CD8-positive, alpha-beta T cell (primary cell): ENCODE measurements at regions of chr16 and their contacts with region 1.

Region 1: GRCh38 chr16:75555707-75556430 is at the start of gene TMEM231:
- DNase-seq: peak; percentile 95 to 98 (median 97)
- ATAC-seq: peak; percentile 96
- H3K4me3 ChIP-seq: peak within 1 kb of the TSS; percentile 61 to 69
- H3K4me3 Mint-ChIP-seq: peak within 1 kb of the TSS; percentile 86
- H3K27ac ChIP-seq: peak within 1 kb of the TSS; percentile 65 to 70
- H3K27ac Mint-ChIP-seq: peak within 1 kb of the TSS; percentile 88
- H3K4me1 ChIP-seq: peaks cover 12% of the 10 kb centered on the region
- H3K4me1 Mint-ChIP-seq: peaks cover 14% of the 10 kb centered on the region
- H3K27me3 ChIP-seq: no peaks in the 10 kb centered on the region
- H3K27me3 Mint-ChIP-seq: peaks cover 9% of the 10 kb centered on the region
- CTCF ChIP-seq: no peak
- total RNA-seq, gene TMEM231: 2.1 to 2.8 TPM

Region 2: DNA sequence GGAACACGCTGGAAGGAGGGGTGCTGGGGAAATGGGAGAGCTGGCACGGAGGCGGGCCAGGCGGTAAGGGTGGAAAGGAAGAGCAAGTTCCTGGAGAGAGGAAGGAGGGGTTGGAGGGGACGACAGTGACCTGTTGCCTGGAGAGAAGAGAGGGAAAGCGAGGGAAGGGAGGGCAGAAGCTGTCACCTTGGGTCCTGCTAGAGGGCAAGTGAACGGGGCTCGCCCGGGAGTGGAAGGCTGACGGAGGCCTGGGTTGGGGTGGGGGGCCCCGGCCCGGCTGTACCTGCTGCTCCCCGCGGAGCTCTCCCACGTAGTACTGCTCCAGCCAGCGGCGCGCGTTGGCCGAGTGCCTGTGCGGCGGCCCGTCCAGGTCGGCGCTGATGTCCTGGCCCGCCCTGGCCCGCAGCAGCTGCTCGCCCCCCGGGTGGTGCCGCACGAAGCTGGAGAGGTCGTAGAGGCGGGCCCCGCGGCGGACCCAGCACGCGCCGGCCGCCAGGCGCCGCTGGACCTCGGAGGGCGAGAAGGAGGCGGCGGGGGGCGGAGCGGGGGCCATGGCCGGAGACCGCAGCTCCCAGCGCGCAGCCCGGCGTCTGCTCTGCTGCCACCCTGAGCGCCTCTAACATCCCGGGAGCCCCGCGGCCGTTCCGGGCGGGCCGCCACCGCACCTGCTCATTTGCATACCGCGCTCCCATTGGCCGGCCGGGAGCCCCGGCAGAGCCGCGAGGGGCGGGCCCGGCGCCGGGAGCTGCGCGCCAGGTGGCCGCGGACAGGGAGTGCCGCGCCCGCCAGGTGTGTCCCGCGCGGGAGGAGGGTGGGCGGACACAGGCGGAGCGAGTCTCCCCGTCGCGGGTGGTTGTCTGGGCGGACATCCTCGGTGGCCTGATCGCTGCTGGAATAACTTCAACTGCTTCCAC is 781.4 kb before region 1 on chr16 and contains the start of gene FA2H:
- CTCF ChIA-PET with region 1: no interaction called
- POLR2A ChIA-PET with region 1: no interaction called
- intact Hi-C with region 1: no loop called
- DNase-seq: peak; percentile 11 to 70 (median 59)
- ATAC-seq: peak; percentile 97
- H3K4me3 ChIP-seq: peak within 1 kb of the TSS in 1 of 2 experiments; percentile 9
- H3K4me3 Mint-ChIP-seq: peak within 1 kb of the TSS; percentile 75
- H3K27ac ChIP-seq: no peak within 1 kb of the TSS
- H3K27ac Mint-ChIP-seq: no peak within 1 kb of the TSS
- H3K4me1 ChIP-seq: peaks cover 4% of the 10 kb centered on the region
- H3K4me1 Mint-ChIP-seq: peaks cover 11% of the 10 kb centered on the region
- H3K27me3 ChIP-seq: peaks cover 9 to 11% of the 10 kb centered on the region in 2 experiments
- H3K27me3 Mint-ChIP-seq: peaks cover 36% of the 10 kb centered on the region
- CTCF ChIP-seq: no peak
- total RNA-seq, gene FA2H: not detected

Region 3: DNA sequence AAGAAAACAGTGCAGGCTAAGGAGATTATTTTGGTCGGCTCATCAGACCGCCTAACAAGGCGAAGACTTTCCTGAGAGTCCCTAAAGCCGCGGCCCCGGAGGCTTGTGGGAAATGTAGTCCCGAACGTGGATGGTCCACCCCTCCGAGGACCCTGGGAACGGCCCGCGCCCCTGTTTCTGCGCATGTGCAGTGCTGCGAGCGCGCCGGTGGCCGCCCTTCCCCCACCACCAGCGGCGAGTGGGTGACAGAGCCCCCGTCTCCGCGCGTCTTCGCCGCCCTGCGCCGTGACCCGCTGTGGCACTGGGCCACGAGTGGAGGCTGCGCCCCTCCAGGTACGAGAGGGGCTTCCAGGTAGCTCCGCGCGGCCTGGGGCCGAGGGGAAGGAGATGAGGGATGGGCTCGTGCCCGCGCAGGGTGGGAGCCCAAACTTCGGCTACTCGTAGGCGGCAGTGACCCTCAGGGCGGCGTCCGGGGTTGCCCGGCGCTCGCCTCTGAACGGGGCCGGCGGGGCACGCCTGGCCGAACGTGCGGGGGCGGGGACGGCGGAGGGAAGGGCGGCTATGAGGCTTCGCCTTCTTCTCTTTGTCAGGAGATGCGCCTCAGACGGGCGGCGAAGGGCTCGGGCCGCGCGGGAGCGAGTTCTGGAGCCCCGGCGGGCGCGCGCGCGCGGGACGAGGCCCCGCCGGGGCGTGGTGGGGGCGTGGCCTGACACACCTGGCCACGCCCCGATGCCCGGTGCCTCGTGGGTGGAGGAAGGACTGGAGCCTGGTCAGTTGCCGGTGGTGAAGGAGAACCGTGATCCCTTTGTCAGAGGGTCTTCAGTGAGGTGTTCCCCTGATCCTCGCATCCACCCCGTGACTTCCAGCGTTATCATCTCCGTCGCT is 407.3 kb before region 1 on chr16 and contains the start of gene ZFP1:
- CTCF ChIA-PET with region 1: no interaction called
- POLR2A ChIA-PET with region 1: no interaction called
- intact Hi-C with region 1: loop called in 1 of 2 experiments (anchors 5 kb)
- DNase-seq: peak; percentile 86 to 98 (median 95)
- ATAC-seq: peak; percentile 89
- H3K4me3 ChIP-seq: peak within 1 kb of the TSS; percentile 85 to 100
- H3K4me3 Mint-ChIP-seq: peak within 1 kb of the TSS; percentile 87
- H3K27ac ChIP-seq: peak within 1 kb of the TSS; percentile 84
- H3K27ac Mint-ChIP-seq: peak within 1 kb of the TSS; percentile 88
- H3K4me1 ChIP-seq: peaks cover 12% of the 10 kb centered on the region
- H3K4me1 Mint-ChIP-seq: peaks cover 16% of the 10 kb centered on the region
- H3K27me3 ChIP-seq: no peaks in the 10 kb centered on the region
- H3K27me3 Mint-ChIP-seq: no peaks in the 10 kb centered on the region
- CTCF ChIP-seq: no peak
- total RNA-seq, gene ZFP1: 11.9 to 12.9 TPM